AG04449 (cell line): ENCODE measurements at regions of chr22 and their contacts with region 1.

Region 1: GRCh38 chr22:32803020-32803754 is 1.7 kb downstream of the TIMP3 start:
- DNase-seq: no peak
- H3K4me3 ChIP-seq: peak overlapping the region; percentile 77
- CTCF ChIP-seq: no peak

Region 2: DNA sequence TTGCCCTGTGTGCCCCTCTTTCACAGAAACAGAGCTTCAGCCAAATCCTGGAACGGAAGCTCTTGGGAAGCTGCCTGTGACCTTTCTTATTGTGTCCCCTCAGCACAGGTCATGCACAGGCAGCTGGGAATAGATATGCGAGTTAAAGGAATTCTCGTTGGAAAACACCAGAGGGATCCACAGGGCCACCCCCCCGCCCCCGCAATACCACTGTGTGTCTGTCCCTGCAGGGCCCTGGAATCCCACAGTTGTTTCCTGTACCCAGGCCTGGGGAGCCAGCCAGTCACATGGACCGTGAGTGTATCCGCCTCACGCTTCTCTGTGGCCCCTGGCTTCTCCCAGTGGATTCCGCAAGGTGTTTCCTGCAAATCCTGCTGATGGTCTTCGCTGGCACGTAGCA is 27.3 kb after region 1 on chr22:
- CTCF ChIA-PET with region 1: interaction called, 24 read pairs
- POLR2A ChIA-PET with region 1: interaction called, 6 read pairs
- DNase-seq: no peak
- H3K4me3 ChIP-seq: no peak overlapping the region
- CTCF ChIP-seq: no peak

Region 3: GRCh38 chr22:33000342-33001280 is 197.4 kb after region 1 on chr22:
- CTCF ChIA-PET with region 1: interaction called, 18 read pairs
- POLR2A ChIA-PET with region 1: no interaction called
- DNase-seq: no peak
- H3K4me3 ChIP-seq: no peak overlapping the region
- CTCF ChIP-seq: peak; percentile 96

Region 4: GRCh38 chr22:33116872-33117547 is 313.8 kb after region 1 on chr22:
- CTCF ChIA-PET with region 1: no interaction called
- POLR2A ChIA-PET with region 1: no interaction called
- DNase-seq: no peak
- H3K4me3 ChIP-seq: no peak overlapping the region
- CTCF ChIP-seq: no peak